GM10248 (cell line): ENCODE measurements at regions of chr11 and their contacts with region 1.

Region 1: GRCh38 chr11:80916173-80916798 is 1475.5 kb upstream of the TENM4 start:
- DNase-seq: no peak
- CTCF ChIP-seq: no peak

Region 2: DNA sequence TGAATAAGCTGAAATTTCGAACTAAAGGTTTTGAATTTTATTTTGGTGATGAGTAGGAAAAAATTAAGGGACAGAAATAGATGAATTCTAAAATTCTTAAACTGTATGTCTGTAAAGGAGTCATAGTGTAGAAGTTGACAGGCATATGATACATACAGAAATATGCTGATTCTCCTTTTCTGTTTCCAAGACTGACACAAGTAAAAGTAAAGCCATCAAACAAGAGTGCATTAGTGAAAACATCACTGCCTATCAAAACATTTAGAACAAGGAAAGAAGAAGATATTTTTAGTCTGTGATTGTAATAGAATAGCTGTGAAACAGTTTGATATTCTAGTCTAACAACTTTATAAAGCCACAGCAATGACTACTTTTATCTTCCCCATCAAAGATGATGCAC is 157.5 kb before region 1 on chr11:
- CTCF ChIA-PET with region 1: no interaction called
- POLR2A ChIA-PET with region 1: no interaction called
- DNase-seq: no peak
- CTCF ChIP-seq: no peak

Region 3: DNA sequence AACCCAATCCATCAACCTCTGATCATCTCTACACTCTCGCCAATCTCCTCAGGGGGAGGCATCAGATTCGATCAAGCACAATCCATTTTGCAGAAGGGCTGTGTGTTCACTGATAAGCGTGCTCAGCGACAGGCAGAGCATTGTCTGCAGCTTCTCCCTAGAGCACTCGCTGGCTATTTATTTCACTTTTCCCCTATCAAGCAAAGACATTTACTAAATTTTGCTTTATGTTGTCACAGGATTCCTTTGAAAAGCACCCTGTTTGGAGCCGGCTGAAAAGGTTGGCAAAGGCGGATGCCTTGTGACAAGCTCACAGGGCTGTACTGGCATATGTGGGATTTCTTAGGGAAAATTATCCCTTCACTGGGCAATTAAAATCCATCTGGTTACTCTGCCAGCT is 94.0 kb before region 1 on chr11:
- CTCF ChIA-PET with region 1: no interaction called
- POLR2A ChIA-PET with region 1: no interaction called
- DNase-seq: no peak
- CTCF ChIP-seq: no peak

Region 4: GRCh38 chr11:80899381-80899780 is 16.9 kb before region 1 on chr11:
- CTCF ChIA-PET with region 1: interaction called, 11 read pairs
- POLR2A ChIA-PET with region 1: no interaction called
- DNase-seq: no peak
- CTCF ChIP-seq: no peak

Region 5: DNA sequence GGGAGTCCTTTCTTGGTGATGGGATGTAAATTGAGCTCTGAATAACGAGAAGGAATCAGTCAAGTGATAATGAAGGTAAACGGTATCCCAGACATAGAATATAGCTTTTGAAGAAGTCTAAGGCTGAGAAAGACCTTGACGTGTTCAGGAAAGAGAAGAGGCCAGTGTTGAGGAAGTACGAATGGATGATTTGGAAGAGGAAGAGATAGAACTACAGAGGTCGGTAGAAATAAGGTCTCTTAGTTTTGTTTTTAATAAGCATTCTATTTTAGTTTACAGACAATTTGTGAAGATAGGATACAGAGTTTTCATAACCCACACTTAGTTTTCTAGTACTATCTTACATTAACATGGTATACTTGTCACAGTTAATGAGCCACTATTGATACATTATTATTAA is 219.3 kb after region 1 on chr11:
- CTCF ChIA-PET with region 1: no interaction called
- POLR2A ChIA-PET with region 1: no interaction called
- DNase-seq: no peak
- CTCF ChIP-seq: no peak